Activated CD4-positive, alpha-beta memory T cell treated with anti-CD3 and anti-CD28 coated beads for 36 hours (primary cell): ENCODE measurements at regions of chr14 and their contacts with region 1.

Region 1: DNA sequence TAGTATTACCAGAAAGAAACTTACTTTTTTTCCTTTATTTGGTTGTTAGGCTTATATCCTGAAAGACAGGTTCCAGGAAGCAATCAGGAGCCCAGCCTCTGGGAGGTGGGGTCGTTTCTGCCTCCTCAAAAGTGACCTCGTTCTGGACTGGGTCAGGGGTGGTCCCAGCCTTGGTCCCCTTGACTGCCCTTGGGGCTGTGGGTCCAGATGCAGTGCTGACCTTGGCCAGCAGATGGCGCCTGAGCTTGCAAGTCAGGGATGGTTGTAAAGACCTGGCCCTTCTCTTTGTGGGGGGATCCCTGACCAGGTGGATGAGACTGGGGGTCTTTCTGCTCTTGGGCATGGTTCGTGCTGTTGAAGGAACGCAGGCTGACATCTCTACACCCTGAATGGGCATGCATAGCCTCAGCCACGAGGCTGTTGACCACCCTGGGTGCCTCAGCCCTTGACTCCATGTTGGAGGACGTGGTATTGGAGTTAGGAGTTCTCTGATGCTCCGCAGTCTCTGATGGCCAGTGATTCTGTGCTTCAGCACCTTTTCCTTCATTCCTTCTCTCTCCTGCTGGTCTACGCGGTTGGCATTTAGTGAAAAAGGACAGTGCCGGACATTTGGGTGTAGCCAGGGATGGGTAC is 62.4 kb downstream of the ADCK1 start:
- DNase-seq: peak; percentile 82
- H3K4me3 Mint-ChIP-seq: no peak overlapping the region
- H3K27ac Mint-ChIP-seq: no peak overlapping the region
- H3K4me1 Mint-ChIP-seq: no peaks in the 10 kb centered on the region
- H3K27me3 Mint-ChIP-seq: no peaks in the 10 kb centered on the region

Region 2: DNA sequence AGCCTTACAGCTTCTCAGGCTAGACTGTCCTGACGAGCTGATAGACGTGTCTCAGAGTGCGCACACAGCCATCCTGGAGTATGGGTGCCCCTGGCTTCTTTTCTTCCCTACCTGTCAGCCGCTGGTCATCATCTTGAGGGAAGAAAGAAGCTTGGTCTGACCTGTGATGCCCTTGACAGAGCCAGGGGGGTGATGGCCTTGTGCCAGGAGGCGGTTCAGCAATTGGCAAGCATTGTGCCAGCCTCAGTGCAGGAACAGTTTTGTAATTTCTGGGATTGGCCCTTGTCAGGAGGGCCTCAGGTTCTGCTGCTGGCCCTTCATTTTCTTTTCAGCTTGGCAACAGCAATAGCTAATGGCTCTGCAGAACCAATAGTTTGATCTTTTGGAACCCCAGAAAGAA is 17.8 kb after region 1 on chr14:
- CTCF ChIA-PET with region 1: interaction called, 18 read pairs
- POLR2A ChIA-PET with region 1: interaction called, 3 read pairs
- intact Hi-C with region 1: no loop called
- DNase-seq: no peak
- H3K4me3 Mint-ChIP-seq: no peak overlapping the region
- H3K27ac Mint-ChIP-seq: no peak overlapping the region
- H3K4me1 Mint-ChIP-seq: no peaks in the 10 kb centered on the region
- H3K27me3 Mint-ChIP-seq: no peaks in the 10 kb centered on the region

Region 3: GRCh38 chr14:77991128-77991772 is 129.0 kb after region 1 on chr14:
- CTCF ChIA-PET with region 1: interaction called, 3 read pairs
- POLR2A ChIA-PET with region 1: no interaction called
- intact Hi-C with region 1: loop called (anchors 1 kb)
- DNase-seq: no peak
- H3K4me3 Mint-ChIP-seq: no peak overlapping the region
- H3K27ac Mint-ChIP-seq: no peak overlapping the region
- H3K4me1 Mint-ChIP-seq: no peaks in the 10 kb centered on the region
- H3K27me3 Mint-ChIP-seq: no peaks in the 10 kb centered on the region

Region 4: GRCh38 chr14:78005325-78005724 is 143.1 kb after region 1 on chr14:
- CTCF ChIA-PET with region 1: no interaction called
- POLR2A ChIA-PET with region 1: no interaction called
- intact Hi-C with region 1: no loop called
- DNase-seq: no peak
- H3K4me3 Mint-ChIP-seq: no peak overlapping the region
- H3K27ac Mint-ChIP-seq: no peak overlapping the region
- H3K4me1 Mint-ChIP-seq: no peaks in the 10 kb centered on the region
- H3K27me3 Mint-ChIP-seq: no peaks in the 10 kb centered on the region

Region 5: DNA sequence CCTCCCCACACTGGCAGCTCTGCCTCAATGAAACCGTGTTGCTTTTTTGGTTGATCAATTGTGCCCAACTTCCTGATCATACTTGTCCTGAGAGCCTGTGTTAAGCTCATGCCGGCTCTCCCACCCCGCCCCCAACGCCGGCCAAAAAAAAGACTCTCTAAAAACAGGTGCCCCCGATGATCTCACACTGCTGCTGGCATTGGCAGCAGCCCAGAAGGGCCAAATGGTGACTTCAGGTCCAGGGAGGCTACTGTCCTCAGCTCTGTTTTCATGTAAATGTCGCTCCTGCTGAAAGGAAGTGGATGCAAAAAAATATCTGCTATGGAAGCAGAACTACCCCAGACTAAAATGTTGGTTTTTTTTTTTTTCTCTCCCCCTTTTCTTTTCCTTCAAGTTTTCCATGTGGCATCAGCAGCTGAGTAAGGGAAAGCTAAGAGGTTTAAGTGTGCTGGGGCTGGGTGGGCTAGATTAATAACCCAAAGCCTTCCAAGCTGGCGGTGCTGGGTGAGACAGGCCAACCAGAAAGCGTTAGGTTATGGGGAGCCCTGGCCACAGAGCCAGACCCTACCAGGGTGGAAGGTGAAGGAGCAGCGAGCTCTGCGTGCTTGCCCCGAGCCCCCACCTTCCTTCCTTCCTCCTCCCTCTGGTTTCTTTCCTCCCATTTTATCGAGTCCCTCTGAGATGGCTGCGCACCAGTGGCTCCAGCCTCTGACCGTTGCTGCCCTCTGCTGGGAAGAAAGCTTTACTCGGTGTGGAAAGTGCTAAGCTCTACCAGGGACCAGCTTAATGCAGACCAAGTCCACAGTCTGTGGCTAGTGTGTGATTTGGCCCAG is 704.0 kb after region 1 on chr14:
- CTCF ChIA-PET with region 1: interaction called, 25 read pairs
- POLR2A ChIA-PET with region 1: no interaction called
- intact Hi-C with region 1: loop called (anchors 2 kb)
- DNase-seq: peak; percentile 75
- H3K4me3 Mint-ChIP-seq: no peak overlapping the region
- H3K27ac Mint-ChIP-seq: no peak overlapping the region
- H3K4me1 Mint-ChIP-seq: no peaks in the 10 kb centered on the region
- H3K27me3 Mint-ChIP-seq: no peaks in the 10 kb centered on the region